ENCODE measurements at regions of chr3 and their contacts with region 1.

Region 1: DNA sequence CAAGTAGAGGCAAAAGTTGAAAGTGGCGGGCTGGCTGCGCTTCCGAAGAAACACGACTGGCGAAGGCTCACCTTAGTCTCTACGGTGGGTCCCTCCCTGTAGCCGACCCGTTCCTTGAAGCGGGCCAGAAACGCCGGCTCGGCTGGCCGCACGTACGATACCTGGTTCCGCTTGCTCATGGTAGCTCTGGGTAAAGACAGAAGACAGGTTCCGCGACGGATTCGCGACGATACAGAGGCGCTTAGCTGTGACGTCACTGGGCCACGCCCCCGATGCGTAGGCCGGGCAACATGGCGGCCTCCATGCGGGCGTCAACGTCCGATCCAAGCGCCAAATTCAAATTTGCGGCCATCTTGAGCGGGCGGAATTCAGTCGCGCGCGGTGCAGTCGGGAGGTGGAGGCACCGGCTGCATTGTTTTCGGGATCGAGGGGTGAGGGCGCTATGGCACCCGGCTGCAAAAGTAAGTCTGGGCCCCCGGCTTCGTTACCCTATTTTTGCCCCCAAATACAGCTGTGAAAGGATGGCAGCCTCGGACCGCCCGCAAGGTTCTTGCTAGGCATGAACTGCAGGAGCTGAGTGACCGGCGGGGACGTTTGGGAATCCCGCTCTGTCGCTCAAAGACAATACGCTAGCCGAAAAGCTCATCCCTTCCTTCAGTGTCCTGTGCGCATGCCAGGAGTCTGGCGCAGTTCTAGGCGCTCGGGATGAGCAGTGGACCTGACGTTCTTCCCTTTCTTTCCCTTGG is at the starts of genes KIAA1143 and KIF15:
- DNase-seq: peak; percentile 95 to 98 (median 96)
- ATAC-seq: peak; percentile 99 to 100 (median 100)
- H3K4me3 ChIP-seq: peak within 1 kb of the TSS; percentile 63 to 94 (median 74)
- H3K27ac ChIP-seq: peak within 1 kb of the TSS in 11 of 12 donors; percentile 34 to 84 (median 72)
- H3K4me1 ChIP-seq: peaks cover 0 to 20% (median 13%) of the 10 kb centered on the region in 12 donors
- H3K27me3 ChIP-seq: no peaks in the 10 kb centered on the region
- CTCF ChIP-seq: peak in 2 of 12 donors; percentile 17 to 22
- POLR2A ChIP-seq: peak in 1 of 2 donors; percentile 53
- total RNA-seq, gene KIAA1143: 21.9 to 41.7 (median 30.5) TPM
- total RNA-seq, gene KIF15: 0.16 to 3.0 (median 0.77) TPM in 8 of 9 donors, not detected in the other

Region 2: GRCh38 chr3:44125882-44126281 is 635.7 kb before region 1 on chr3:
- intact Hi-C with region 1: no loop called
- DNase-seq: peak in 1 of 5 donors; percentile 31
- ATAC-seq: peak in 2 of 4 donors; percentile 67 to 87
- H3K4me3 ChIP-seq: no peak overlapping the region
- H3K27ac ChIP-seq: no peak overlapping the region
- H3K4me1 ChIP-seq: peaks cover 0 to 8% (median 0%) of the 10 kb centered on the region in 12 donors
- H3K27me3 ChIP-seq: no peaks in the 10 kb centered on the region
- CTCF ChIP-seq: no peak
- POLR2A ChIP-seq: no peak

Region 3: DNA sequence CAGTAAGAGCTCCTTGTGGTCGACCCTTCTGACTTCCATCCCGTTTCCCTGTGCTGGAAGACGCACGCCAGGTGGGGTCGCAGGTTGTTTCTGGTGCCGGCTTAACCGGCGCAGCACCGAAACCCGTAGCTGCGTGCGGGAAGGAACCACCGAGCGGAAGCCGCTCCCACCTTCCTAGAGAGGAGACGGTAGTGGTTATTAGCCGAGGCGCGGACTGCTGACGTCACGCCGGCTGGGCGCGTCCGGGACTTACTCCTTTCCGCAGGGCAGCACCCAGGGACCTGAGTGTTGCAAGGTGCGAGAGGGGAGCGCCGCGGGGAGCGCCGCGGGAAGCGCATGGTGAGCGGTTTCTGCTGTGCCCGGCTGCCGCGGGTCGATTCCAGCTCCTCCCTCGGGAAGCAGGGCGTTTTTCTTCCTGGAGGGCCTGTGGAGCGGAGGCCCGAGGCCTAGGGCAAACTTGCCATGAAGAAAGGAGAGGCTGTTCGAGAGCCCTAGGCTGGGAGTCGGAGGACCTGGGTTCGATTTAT is 32.1 kb before region 1 on chr3 and contains the start of gene ZNF501:
- intact Hi-C with region 1: loop called in 2 of 10 experiments (anchors 2 kb)
- DNase-seq: peak; percentile 94 to 97 (median 95)
- ATAC-seq: peak; percentile 95 to 100 (median 100)
- H3K4me3 ChIP-seq: peak within 1 kb of the TSS; percentile 46 to 94 (median 78)
- H3K27ac ChIP-seq: peak within 1 kb of the TSS in 10 of 12 donors; percentile 18 to 75 (median 57)
- H3K4me1 ChIP-seq: peaks cover 0 to 12% (median 3%) of the 10 kb centered on the region in 12 donors
- H3K27me3 ChIP-seq: no peaks in the 10 kb centered on the region
- CTCF ChIP-seq: peak in 1 of 12 donors; percentile 25
- POLR2A ChIP-seq: peak in 1 of 2 donors; percentile 53
- total RNA-seq, gene ZNF501: 1.8 to 5.5 (median 3.9) TPM

Region 4: DNA sequence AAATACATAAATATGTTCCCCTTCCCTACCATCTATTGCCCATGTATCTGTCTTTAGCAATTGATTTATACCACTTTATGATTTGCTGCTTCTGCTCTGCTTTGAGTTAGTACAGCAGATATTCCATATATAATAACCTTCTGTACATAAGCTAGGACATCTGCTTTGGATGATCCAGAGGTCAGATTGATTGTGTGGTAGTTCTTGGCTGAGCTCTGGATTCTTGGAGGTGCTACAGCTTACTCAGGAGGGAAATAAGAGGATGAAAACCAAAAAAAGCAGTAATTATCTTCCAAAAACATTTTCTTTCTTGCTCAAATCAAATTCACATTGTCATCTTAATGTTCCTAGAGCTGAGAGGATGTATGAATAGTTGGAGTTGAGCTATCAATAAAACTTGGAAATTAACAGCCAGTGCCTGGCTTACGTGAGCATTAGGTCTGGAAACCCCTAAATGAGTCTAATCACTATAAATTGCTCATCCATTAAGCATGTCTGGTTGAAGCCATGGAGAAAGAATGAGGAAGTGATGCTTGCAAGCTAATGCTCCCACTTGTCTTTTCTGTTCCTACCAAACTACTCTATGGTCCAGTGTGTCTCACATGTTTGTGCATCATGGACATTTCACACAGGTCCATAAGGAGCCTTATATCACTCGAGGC is 63.8 kb after region 1 on chr3:
- intact Hi-C with region 1: no loop called
- DNase-seq: no peak
- ATAC-seq: no peak
- H3K4me3 ChIP-seq: no peak overlapping the region
- H3K27ac ChIP-seq: no peak overlapping the region
- H3K4me1 ChIP-seq: no peaks in the 10 kb centered on the region
- H3K27me3 ChIP-seq: no peaks in the 10 kb centered on the region
- CTCF ChIP-seq: no peak
- POLR2A ChIP-seq: no peak

Region 5: GRCh38 chr3:44845528-44846520 is 84.2 kb after region 1 on chr3:
- intact Hi-C with region 1: loop called in 2 of 10 experiments (anchors 5 kb)
- DNase-seq: peak in 4 of 5 donors; percentile 70 to 76 (median 72)
- ATAC-seq: peak; percentile 98 to 99 (median 98)
- H3K4me3 ChIP-seq: no peak overlapping the region
- H3K27ac ChIP-seq: peak overlapping the region; percentile 21 to 90 (median 78)
- H3K4me1 ChIP-seq: peaks cover 0 to 24% (median 2%) of the 10 kb centered on the region in 12 donors
- H3K27me3 ChIP-seq: no peaks in the 10 kb centered on the region
- CTCF ChIP-seq: no peak
- POLR2A ChIP-seq: no peak

Region 6: GRCh38 chr3:44861412-44862220 is 100.0 kb after region 1 on chr3 and contains the start of gene TMEM42:
- intact Hi-C with region 1: loop called in 7 of 10 experiments (anchors 5 to 10 kb)
- DNase-seq: peak; percentile 90 to 96 (median 94)
- ATAC-seq: peak; percentile 96 to 99 (median 99)
- H3K4me3 ChIP-seq: peak within 1 kb of the TSS; percentile 20 to 84 (median 70)
- H3K27ac ChIP-seq: peak within 1 kb of the TSS; percentile 57 to 96 (median 89)
- H3K4me1 ChIP-seq: peaks cover 0 to 20% (median 8%) of the 10 kb centered on the region in 12 donors
- H3K27me3 ChIP-seq: no peaks in the 10 kb centered on the region
- CTCF ChIP-seq: peak; percentile 5 to 51 (median 28)
- POLR2A ChIP-seq: peak in 1 of 2 donors; percentile 81
- total RNA-seq, gene TMEM42: 7.3 to 13.0 (median 10.6) TPM

Measured in heart left ventricle (tissue), 16 donors.